Right cardiac atrium (tissue), 5 donors: ENCODE measurements at regions of chr3 and their contacts with region 1.

Region 1: DNA sequence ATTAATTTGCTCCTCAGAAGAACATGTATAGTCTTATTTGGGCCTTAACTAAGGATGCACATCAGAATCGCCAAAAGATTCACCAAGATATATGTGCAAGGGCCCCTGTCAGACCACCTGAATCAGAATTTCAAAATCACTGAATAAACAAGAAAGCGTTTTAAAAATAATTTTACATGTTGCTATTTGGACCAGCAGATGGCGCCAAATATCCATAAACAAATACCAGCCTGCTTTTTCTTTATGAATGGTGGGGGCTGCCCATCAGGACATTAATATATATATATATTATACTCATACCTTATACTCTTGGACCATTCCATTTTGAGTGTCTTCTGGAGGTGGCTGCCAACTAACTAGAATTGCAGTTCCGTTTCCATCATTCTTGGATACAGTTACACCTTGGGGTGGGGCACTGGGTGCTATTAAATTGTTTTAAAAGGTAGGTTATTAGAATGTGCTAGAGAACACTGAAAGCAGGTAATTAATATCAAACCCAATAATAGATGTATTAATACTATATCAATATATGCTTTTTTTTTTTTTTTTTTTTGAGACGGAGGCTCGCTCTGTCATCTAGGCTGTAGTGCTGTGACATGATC is 1108.3 kb downstream of the ROBO1 start:
- DNase-seq: no peak
- ATAC-seq: no peak
- H3K4me3 ChIP-seq: no peak overlapping the region
- H3K27ac ChIP-seq: no peak overlapping the region
- H3K4me1 ChIP-seq: no peaks in the 10 kb centered on the region
- H3K27me3 ChIP-seq: no peaks in the 10 kb centered on the region

Region 2: DNA sequence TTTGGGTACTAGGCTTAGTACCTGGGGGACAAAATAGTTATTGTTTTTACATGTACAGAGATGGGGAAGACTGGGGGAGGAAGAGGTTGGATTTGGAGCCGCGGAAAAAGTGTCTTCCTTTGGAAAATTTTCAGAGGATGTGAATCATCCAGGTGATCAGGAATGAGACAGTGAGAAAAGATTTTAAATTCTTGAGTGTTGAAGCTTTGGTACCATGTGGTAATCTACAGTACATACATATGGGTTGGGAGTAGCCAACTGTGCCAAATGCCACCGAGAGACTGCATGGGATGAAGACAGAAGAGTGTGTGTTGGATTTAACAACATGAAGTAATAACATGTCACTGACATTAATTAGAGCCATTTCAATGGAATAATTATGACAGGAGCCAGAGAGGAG is 129.9 kb before region 1 on chr3:
- intact Hi-C with region 1: no loop called
- DNase-seq: no peak
- ATAC-seq: no peak
- H3K4me3 ChIP-seq: no peak overlapping the region
- H3K27ac ChIP-seq: no peak overlapping the region
- H3K4me1 ChIP-seq: no peaks in the 10 kb centered on the region
- H3K27me3 ChIP-seq: no peaks in the 10 kb centered on the region

Region 3: GRCh38 chr3:79032686-79033318 is 373.3 kb after region 1 on chr3:
- intact Hi-C with region 1: loop called (anchors 2 to 5 kb)
- DNase-seq: no peak
- ATAC-seq: no peak
- H3K4me3 ChIP-seq: no peak overlapping the region
- H3K27ac ChIP-seq: no peak overlapping the region
- H3K4me1 ChIP-seq: no peaks in the 10 kb centered on the region
- H3K27me3 ChIP-seq: no peaks in the 10 kb centered on the region